Heart left ventricle (tissue), 16 donors: ENCODE measurements at regions of chr1 and their contacts with region 1.

Region 1: DNA sequence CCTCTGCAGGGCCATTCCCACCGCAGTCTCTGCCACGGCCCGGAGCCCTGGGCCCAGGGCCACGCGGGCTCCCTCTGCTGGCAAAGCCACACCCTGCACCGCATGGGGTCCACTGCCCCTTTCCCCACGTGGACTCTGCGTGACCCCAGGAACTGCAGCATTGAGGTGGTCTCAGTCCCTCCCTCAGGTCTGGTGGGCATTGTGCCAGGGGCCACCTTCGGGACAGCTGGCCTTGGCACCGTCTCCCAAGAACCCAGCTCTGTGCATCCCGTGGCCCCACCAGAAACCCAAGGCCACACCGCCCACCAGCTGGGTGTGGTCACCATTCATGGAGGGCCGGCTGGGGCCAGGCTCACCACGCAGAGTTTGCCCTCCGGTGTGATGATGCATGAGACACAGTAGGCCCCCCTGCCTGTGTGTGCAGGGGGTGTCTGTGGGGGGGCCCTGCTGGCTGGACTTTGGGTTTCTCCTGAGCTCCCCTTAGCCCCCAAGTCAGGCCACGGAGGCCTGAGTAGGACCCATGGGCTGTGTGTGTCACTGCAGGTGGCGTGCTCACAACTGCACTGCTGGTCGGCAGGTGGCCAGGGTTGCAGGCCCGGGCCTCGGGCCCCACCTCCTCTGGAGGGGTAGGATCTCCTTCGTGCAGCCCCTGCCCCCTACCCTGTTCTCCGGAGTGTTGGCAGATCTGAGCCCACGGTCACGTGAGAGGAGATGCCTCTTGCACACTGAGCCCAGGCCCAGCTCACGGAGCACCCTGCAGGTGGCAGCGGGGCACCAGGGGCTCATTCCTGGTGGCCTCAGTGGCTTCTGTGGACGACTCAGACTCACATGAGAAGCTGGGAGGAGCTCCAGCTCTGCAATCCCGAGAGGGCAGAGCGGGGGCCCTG is 5.8 kb downstream of the VWA1 start:
- DNase-seq: peak in 2 of 5 donors; percentile 57 to 69
- ATAC-seq: peak; percentile 47 to 86 (median 76)
- H3K4me3 ChIP-seq: no peak overlapping the region
- H3K27ac ChIP-seq: peak overlapping the region in 1 of 12 donors; percentile 36
- H3K4me1 ChIP-seq: peaks cover 0 to 26% (median 17%) of the 10 kb centered on the region in 12 donors
- H3K27me3 ChIP-seq: peaks cover 0 to 5% (median 0%) of the 10 kb centered on the region in 9 donors
- CTCF ChIP-seq: peak; percentile 84 to 95 (median 90)
- POLR2A ChIP-seq: no peak

Region 2: DNA sequence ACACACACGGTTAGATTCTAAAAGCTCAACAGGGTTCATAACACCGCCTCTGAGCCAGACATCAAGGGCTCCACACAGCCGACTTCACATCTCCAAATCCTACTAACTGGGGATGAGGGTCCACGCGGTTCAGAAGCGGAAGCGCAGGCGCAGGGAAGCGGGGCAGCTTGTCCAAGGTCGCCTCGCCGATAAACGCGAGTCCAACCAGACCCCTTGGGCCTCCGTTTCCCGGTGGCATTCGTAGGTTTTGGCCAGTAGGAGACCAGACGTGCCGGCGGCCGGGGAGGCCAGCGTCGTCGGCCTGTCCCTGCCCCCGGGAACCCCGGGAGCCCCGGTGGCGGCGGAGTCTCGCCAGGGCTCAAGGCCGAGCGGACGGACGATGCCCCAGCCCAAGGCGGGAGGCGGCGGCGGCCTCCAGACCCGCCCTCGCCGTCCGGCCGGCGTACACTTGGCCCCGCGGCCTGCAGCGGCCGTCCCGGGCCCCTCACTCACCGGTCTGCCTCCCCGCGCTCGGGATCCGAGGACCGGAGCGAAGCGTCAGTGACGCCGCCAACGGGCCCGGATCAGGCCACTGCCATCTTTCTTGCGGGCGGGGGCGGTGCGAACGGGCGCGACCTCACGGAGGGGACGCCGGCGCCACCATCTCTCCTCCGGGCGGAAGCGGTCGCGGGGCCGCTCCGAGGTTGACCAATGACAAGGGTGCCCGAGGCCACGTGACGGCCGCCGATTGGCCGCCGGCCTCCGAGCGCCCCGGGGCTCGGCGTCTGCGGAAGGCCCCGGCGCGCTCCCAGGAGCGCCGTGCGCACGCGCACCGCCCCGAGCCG is 209.6 kb before region 1 on chr1 and contains the start of gene SDF4:
- intact Hi-C with region 1: no loop called
- DNase-seq: peak; percentile 97 to 99 (median 98)
- ATAC-seq: peak; percentile 96 to 98 (median 97)
- H3K4me3 ChIP-seq: peak within 1 kb of the TSS; percentile 81 to 100 (median 98)
- H3K27ac ChIP-seq: peak within 1 kb of the TSS; percentile 92 to 99 (median 97)
- H3K4me1 ChIP-seq: peaks cover 8 to 49% (median 31%) of the 10 kb centered on the region in 12 donors
- H3K27me3 ChIP-seq: no peaks in the 10 kb centered on the region
- CTCF ChIP-seq: no peak
- POLR2A ChIP-seq: no peak
- total RNA-seq, gene SDF4: 102 to 167 (median 120) TPM

Region 3: GRCh38 chr1:1399187-1399871 is 41.9 kb before region 1 on chr1 and contains the start of gene CCNL2:
- intact Hi-C with region 1: loop called in 1 of 10 experiments (anchors 2 kb)
- DNase-seq: peak; percentile 99 to 100 (median 99)
- ATAC-seq: peak; percentile 95 to 99 (median 96)
- H3K4me3 ChIP-seq: peak within 1 kb of the TSS; percentile 76 to 100 (median 98)
- H3K27ac ChIP-seq: peak within 1 kb of the TSS; percentile 78 to 97 (median 92)
- H3K4me1 ChIP-seq: peaks cover 5 to 53% (median 37%) of the 10 kb centered on the region in 12 donors
- H3K27me3 ChIP-seq: no peaks in the 10 kb centered on the region
- CTCF ChIP-seq: peak; percentile 35 to 79 (median 60)
- POLR2A ChIP-seq: peak in 1 of 2 donors; percentile 80
- total RNA-seq, gene CCNL2: 35.4 to 66.5 (median 50.7) TPM

Region 4: DNA sequence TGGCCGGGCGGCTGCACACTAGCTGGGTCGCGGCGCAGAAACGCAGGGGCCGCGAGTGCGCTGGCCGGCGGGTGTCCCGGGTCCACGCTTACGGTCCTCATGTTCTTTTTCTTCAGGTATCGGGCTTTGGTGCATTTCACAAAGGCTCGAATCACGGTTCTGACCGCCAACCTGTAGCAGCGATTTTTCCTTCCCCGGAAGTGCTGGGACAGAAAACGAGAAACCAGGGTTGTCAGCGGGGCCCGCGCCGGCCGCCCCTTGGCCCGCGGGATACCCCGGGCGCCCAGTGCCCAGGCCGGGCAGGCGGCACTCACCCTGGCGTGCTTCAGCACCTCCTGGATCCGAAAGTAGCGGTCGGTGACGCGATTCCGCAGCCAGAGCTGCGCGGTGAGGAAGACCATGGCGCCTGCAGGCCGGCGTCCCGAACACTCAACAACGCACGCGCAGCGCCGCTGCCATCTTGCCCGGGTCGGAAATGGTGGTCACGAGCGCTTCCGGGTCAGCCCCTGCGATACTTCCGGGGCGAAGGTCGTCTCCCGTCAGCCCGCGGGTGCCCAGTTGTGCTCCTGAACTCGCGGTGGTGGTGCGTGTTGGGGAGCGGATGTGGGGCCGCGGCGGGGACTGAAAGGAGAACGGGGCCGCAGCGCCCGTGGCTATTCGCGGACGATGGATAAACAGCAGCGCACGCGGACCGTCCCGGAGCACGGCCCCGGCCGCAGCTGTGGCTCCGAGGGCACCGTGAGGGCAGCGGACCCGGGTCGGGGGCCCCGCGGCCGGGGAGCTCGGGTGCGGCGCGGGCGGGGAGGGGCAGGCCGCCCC is 34.2 kb before region 1 on chr1 and contains the start of gene MRPL20:
- intact Hi-C with region 1: loop called in 5 of 10 experiments (anchors 2 to 5 kb)
- DNase-seq: peak; percentile 94 to 97 (median 96)
- ATAC-seq: peak; percentile 92 to 100 (median 98)
- H3K4me3 ChIP-seq: peak within 1 kb of the TSS; percentile 61 to 100 (median 94)
- H3K27ac ChIP-seq: peak within 1 kb of the TSS; percentile 72 to 94 (median 88)
- H3K4me1 ChIP-seq: peaks cover 5 to 43% (median 33%) of the 10 kb centered on the region in 12 donors
- H3K27me3 ChIP-seq: no peaks in the 10 kb centered on the region
- CTCF ChIP-seq: no peak
- POLR2A ChIP-seq: peak in 1 of 2 donors; percentile 71
- total RNA-seq, gene MRPL20: 112 to 208 (median 128) TPM